AG04449 (cell line): ENCODE measurements at regions of chr5 and their contacts with region 1.

Region 1: GRCh38 chr5:73215891-73216610 is 43.1 kb downstream of the TMEM174 start:
- DNase-seq: no peak
- H3K4me3 ChIP-seq: peak overlapping the region; percentile 59
- CTCF ChIP-seq: peak; percentile 92

Region 2: DNA sequence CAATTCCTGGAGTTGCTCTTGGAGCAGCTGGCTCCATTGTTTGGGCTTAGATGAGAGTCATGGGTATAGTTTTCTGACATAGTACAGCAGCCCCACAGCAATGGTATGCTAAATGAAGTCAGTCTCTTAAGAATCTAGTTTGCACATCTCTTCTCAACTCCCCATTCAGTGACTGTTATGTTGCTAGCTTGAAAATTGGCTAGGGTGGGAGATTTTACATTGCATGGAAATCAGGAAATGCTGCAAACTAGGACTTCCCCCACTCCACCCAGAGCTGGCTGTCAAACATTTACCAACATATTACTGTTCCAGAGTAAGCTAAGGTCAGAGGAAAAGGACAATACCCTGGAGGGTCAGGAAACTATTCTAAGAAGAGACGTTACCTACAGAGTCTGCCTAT is 277.8 kb before region 1 on chr5:
- CTCF ChIA-PET with region 1: no interaction called
- POLR2A ChIA-PET with region 1: no interaction called
- DNase-seq: no peak
- H3K4me3 ChIP-seq: no peak overlapping the region
- CTCF ChIP-seq: no peak

Region 3: GRCh38 chr5:73066466-73066865 is 149.6 kb before region 1 on chr5:
- CTCF ChIA-PET with region 1: interaction called, 10 read pairs
- POLR2A ChIA-PET with region 1: no interaction called
- DNase-seq: peak; percentile 33
- H3K4me3 ChIP-seq: no peak overlapping the region
- CTCF ChIP-seq: no peak

Region 4: GRCh38 chr5:73113642-73114041 is 102.4 kb before region 1 on chr5:
- CTCF ChIA-PET with region 1: interaction called, 30 read pairs
- POLR2A ChIA-PET with region 1: interaction called, 5 read pairs
- DNase-seq: no peak
- H3K4me3 ChIP-seq: no peak overlapping the region
- CTCF ChIP-seq: no peak

Region 5: GRCh38 chr5:73189871-73190376 is 26.1 kb before region 1 on chr5:
- CTCF ChIA-PET with region 1: interaction called, 142 read pairs
- POLR2A ChIA-PET with region 1: no interaction called
- DNase-seq: peak; percentile 55
- H3K4me3 ChIP-seq: no peak overlapping the region
- CTCF ChIP-seq: no peak

Region 6: DNA sequence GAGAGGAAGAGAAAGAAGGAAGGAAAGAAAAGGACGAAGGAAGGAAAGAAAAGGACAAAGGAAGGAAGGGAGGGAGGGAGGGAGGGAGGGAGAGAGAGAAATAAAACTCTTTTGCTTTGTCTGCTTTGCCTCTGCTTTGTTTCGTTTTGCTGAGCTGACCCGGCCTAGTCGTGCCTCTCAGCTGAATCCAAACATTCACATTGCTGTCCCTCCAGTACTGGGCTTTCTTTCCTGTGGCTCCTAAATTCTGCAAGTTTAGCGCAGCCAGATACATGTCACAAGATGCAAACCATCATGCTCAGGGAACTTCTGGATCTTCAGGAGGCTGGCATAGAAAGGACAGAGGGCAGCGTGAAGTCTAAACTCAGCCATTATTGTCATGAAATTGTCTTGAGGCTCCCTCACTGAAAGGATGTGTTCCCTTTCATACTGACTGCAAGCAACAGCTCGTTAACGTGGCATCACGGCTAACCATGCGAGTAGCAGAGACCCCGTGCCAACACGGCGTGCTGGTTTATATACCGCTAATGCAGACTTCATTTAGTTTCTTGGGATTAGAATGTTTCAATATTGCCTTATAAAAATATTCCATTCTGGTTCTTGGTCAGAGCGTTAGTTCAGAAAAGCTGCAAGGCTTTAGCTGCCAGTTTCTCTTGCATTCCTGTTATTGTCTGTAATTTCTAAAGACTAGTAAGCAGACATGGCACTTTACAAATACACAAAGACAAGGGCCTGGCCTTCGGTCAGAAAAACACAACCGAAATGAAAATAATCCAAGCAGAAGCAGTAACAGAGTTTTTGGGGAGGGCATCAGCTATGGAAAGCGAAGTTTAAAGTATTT is 51.1 kb after region 1 on chr5:
- CTCF ChIA-PET with region 1: interaction called, 16 read pairs
- POLR2A ChIA-PET with region 1: no interaction called
- DNase-seq: no peak
- H3K4me3 ChIP-seq: peak overlapping the region; percentile 9
- CTCF ChIP-seq: no peak

Region 7: DNA sequence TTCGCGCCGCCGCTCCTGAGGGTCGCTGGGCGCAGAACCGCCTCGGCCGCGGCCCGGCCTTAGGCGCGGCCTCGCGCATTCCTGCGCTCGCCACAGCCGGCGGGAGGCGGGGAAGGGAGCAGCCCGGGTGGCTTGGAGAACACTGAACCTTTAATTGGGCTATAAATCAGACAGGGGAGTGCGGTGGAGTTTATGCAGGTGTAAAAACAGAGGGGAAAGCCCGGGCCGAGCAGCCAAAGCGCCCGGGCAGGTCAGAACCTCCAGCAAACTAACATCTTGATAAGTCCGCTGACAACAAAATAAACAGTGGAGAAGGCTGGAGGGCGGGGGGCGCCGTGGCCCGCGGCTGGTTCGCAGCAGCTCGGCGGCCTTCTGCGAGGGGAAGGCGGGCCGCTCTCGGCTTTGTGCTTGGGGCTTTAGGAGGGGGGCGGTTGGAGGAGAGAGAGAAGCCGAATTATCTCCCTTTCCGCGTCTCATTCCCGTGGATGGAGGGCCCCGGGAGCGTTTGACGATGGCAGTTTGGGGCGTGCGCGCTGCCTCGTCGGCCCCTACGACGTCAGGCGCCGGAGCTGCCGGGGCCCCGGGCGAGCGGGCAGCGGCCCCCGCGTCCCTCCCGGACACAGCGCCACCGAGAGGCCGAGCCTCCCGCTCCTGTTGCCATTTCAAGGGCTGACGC is 221.2 kb after region 1 on chr5:
- CTCF ChIA-PET with region 1: interaction called, 21 read pairs
- POLR2A ChIA-PET with region 1: interaction called, 12 read pairs
- DNase-seq: no peak
- H3K4me3 ChIP-seq: peak overlapping the region; percentile 55
- CTCF ChIP-seq: peak; percentile 66